ENCODE measurements at regions of chr4 and their contacts with region 1.

Region 1: DNA sequence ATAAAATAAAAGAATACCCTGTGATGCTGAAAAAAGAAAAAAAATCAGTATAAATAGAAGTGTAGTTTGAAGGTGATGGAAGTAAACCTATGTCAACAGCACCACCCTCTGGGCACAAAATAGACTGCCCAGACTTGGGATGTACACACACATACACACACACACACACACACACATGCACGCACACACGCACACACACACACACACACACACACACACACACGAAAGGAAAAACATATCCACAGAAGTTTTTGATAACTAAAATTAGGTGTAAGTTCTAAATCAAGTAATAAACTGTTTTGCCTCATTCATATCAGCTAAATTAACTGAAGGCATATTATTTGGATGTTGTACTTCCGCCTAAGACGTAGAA is 40.5 kb downstream of the ANXA5 start:
- DNase-seq: peak; percentile 19 to 48 (median 34)
- H3K4me3 ChIP-seq: no peak overlapping the region
- H3K27ac ChIP-seq: no peak overlapping the region
- H3K4me1 ChIP-seq: no peaks in the 10 kb centered on the region
- H3K27me3 ChIP-seq: no peaks in the 10 kb centered on the region
- CTCF ChIP-seq: no peak
- EP300 ChIP-seq: no peak
- POLR2A ChIP-seq: no peak

Region 2: GRCh38 chr4:121370729-121371325 is 285.4 kb before region 1 on chr4:
- intact Hi-C with region 1: loop called in 1 of 4 experiments (anchors 10 kb)
- DNase-seq: peak in 3 of 5 donors; percentile 30 to 40 (median 31)
- H3K4me3 ChIP-seq: no peak overlapping the region
- H3K27ac ChIP-seq: no peak overlapping the region
- H3K4me1 ChIP-seq: no peaks in the 10 kb centered on the region
- H3K27me3 ChIP-seq: no peaks in the 10 kb centered on the region
- CTCF ChIP-seq: peak in 1 of 3 donors; percentile 31
- EP300 ChIP-seq: no peak
- POLR2A ChIP-seq: no peak